ENCODE measurements at regions of chr18 and their contacts with region 1.

Region 1: DNA sequence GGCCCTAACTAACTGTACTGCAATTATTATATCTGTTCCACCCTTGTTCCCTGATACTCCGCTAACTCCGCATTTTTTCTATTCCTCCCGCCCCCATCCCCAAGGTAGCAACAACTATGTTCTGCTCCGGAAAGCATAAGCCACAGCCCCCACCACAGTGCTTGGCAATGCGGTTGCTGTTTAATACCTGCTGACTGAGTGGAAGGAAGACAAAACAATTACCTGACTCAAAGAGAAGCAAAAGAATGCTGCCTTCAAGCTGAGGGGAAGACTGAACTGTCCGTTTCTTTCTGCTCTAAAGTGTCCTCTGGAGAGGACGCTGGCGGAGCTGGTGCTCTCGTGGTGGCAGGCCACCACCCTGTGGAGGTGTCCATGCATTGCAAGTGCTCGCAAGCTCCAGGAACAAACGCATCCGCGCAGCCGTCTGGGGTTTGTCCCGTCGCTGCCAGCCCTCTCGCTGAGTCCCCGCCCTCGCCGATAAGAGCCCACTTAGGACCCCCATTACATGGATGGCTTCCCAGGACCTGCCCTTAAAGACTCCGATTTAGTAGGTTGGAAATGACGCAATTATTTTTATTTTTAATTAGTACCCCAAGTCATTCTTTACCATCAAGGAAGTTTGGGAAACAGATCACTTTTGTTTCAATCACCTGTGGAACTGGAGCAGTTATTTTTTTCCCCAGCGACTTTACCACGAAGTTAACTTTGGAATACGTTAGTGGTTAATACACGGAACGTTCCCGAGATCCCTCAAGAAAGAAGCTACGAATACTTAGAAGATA is 1.6 kb upstream of the MYL12A start:
- DNase-seq: peak; percentile 94
- H3K4me3 ChIP-seq: peak overlapping the region; percentile 81
- H3K27ac ChIP-seq: peak overlapping the region; percentile 84
- H3K4me1 ChIP-seq: peaks cover 43% of the 10 kb centered on the region
- CTCF ChIP-seq: peak; percentile 98

Region 2: DNA sequence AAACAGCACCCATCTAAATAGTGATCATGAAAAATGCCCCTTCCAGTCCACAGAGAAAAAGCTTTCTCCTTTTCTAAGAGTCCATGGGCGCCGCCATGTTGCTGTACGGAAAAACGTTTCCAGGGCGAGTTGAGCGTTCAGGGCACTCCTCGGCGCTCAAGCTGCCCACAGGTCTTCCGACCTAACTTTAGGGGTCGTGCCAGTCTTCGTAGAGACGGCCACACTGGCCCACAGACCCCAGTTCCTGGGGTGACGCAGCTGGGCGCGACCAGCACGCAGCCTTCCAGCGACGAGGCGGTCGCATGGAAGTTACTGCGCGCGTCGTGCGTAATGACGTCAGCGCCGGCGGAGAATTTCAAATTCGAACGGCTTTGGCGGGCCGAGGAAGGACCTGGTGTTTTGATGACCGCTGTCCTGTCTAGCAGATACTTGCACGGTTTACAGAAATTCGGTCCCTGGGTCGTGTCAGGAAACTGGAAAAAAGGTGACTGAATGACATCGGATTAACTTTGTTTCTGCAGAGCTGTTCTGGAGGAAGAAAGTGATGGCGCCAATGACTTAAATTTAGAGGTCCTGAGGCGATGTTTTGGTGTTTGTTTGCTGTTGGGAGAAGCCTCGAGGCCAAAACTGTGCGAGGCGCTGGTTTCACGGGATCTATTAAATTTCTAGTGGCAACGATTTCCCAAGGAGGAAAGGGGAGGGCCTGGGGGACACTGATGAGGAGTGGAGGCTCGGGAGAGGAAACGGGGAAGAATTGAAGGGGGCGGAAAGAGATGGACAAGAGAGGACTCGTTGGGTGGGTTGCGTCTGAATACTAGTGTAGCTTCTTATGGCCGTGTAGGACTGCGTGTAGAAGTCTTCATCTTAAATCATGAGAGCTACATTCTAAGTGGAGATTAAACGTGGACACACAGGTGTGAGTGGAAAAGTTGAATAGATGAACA is 674.6 kb before region 1 on chr18 and contains the starts of genes METTL4 and NDC80:
- CTCF ChIA-PET with region 1: no interaction called
- POLR2A ChIA-PET with region 1: interaction called, 3 read pairs
- intact Hi-C with region 1: loop called (anchors 5 kb)
- DNase-seq: peak; percentile 94
- H3K4me3 ChIP-seq: peak within 1 kb of the TSS; percentile 84
- H3K27ac ChIP-seq: peak within 1 kb of the TSS; percentile 78
- H3K4me1 ChIP-seq: peaks cover 19% of the 10 kb centered on the region
- CTCF ChIP-seq: no peak
- total RNA-seq, gene METTL4: 11.8 and 12.4 TPM in 2 replicates
- total RNA-seq, gene NDC80: 73.0 and 91.1 TPM in 2 replicates

Region 3: DNA sequence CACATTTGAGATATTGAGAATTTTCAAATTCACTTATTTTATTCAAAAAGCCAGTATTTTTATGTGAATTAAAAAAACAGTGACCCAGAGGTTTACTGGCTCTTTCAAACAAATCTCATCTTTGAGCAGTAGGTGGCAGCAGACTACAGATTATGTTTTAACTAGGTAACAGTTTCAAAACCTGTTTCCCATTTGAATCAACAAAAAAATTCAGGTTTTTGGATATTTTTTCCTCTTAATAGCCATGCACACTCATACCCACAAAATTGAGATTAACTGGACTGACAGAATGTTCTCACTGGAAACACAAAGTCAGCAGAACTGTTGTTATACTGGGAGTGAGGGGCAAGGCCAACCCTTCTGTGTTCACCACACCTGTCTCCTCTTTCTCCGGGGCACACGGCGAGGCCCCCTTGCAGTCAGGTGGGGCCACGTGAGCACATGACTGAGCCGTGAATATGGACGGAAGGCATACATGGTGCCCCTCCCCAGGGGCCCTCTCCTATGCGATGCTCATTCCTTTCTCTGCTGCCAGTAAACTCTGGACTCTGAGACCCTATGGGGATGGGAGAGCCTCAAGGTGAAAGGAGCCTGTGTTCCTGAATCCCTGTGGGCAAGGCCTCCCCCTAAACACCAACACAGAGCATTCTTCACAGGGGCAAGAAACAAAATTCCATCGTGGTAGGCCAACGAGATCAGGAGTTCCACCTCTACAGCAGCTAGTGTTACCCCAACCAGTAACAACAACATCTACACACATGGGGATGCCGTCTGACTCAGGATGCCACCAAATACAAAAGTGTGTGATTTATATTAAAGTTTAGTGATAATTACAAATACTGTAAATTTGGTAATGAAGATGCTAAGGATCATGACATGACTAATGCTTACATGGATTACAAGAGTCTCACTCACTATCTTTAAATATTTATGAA is 313.5 kb before region 1 on chr18:
- CTCF ChIA-PET with region 1: no interaction called
- POLR2A ChIA-PET with region 1: interaction called, 3 read pairs
- intact Hi-C with region 1: loop called (anchors 1 kb)
- DNase-seq: peak; percentile 81
- H3K4me3 ChIP-seq: no peak overlapping the region
- H3K27ac ChIP-seq: no peak overlapping the region
- H3K4me1 ChIP-seq: peaks cover 6% of the 10 kb centered on the region
- CTCF ChIP-seq: peak; percentile 99

Region 4: DNA sequence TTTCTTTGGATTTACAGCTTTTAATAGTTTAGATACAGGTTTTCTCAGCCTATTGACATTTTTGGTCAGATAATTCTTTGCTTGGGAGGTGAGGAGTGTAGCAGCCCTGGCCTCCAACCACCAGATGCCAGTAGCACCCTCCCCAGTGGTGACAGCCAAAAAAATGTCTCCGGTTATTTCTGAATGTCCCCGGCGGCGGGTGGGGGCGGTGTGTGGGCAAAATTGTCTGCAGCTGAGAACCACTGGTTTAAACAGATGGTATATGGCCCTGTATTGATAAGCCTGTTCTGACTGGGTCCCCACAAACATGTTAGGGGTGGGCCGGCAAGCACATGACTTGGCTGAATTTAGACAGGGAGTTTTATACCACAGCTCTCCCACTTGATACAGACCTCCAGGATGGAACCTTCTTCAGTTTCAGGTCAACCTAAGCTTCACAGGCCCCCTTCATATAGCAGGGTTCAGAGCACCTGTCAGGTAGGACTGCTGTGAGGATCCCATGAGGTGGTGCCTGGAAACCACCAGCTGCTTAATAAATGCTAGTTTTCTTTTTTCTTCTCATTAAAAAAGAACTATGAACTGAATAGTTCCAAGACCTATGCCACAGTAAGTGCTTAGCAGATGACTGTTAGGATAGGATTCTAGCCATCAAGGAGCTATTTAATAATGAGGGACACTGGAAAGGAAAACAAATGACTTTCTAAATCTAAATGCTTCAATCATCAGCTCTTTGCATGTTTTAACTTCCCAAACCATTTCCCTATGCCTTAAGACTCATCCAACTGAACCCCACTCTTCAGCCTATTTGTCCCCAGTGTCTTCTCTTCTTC is 251.2 kb before region 1 on chr18:
- CTCF ChIA-PET with region 1: no interaction called
- POLR2A ChIA-PET with region 1: no interaction called
- intact Hi-C with region 1: loop called (anchors 1 kb)
- DNase-seq: peak; percentile 69
- H3K4me3 ChIP-seq: no peak overlapping the region
- H3K27ac ChIP-seq: no peak overlapping the region
- H3K4me1 ChIP-seq: peaks cover 22% of the 10 kb centered on the region
- CTCF ChIP-seq: peak; percentile 86

Region 5: DNA sequence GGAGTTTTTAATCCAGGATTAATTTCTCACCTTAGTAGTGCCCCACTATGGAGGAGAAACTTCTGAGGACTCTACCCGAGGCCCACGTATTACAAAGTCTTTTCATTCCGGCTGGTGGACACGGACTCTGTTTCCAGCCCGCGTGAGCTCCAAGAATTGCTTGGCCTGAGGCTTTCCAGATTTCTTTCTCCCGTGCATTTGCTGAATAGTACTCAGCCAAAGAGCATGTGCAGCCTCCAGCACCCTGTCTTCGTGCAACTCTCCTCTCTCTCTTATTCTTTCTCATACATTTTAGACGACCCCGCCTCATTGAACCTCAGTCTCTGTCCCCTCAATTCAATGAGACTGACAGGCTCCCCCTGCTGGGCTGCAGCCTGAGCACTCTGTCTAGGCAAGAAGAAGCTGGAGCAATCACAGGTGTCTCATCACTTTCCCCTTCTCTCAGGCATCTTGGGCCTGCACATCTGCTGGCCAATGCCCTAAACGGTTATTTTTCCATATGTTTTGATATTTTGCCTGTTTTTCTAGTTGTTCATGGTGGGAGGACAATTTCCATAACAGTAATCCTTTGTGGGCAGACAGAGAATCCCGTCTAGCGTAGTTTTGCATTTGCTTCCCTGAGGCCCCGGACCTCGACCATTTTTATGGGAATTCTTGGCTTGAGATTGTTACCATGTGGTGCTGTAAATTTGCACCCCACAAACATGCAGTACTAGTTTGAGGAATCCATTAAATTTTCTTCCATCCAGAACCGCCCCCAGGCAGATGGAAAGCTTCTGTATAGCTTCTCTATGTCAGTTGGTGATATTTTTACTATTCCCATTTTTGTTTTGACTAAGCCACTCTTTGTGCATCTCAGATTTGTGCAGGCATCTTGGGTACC is 183.0 kb before region 1 on chr18:
- CTCF ChIA-PET with region 1: no interaction called
- POLR2A ChIA-PET with region 1: interaction called, 3 read pairs
- intact Hi-C with region 1: loop called (anchors 1 kb)
- DNase-seq: peak; percentile 72
- H3K4me3 ChIP-seq: no peak overlapping the region
- H3K27ac ChIP-seq: no peak overlapping the region
- H3K4me1 ChIP-seq: peaks cover 7% of the 10 kb centered on the region
- CTCF ChIP-seq: peak; percentile 93

Region 6: GRCh38 chr18:3151399-3152264 is 94.4 kb before region 1 on chr18:
- CTCF ChIA-PET with region 1: interaction called, 3 read pairs
- POLR2A ChIA-PET with region 1: interaction called, 3 read pairs
- intact Hi-C with region 1: loop called (anchors 1 kb)
- DNase-seq: peak; percentile 59
- H3K4me3 ChIP-seq: no peak overlapping the region
- H3K27ac ChIP-seq: no peak overlapping the region
- H3K4me1 ChIP-seq: no peaks in the 10 kb centered on the region
- CTCF ChIP-seq: peak; percentile 83

Region 7: DNA sequence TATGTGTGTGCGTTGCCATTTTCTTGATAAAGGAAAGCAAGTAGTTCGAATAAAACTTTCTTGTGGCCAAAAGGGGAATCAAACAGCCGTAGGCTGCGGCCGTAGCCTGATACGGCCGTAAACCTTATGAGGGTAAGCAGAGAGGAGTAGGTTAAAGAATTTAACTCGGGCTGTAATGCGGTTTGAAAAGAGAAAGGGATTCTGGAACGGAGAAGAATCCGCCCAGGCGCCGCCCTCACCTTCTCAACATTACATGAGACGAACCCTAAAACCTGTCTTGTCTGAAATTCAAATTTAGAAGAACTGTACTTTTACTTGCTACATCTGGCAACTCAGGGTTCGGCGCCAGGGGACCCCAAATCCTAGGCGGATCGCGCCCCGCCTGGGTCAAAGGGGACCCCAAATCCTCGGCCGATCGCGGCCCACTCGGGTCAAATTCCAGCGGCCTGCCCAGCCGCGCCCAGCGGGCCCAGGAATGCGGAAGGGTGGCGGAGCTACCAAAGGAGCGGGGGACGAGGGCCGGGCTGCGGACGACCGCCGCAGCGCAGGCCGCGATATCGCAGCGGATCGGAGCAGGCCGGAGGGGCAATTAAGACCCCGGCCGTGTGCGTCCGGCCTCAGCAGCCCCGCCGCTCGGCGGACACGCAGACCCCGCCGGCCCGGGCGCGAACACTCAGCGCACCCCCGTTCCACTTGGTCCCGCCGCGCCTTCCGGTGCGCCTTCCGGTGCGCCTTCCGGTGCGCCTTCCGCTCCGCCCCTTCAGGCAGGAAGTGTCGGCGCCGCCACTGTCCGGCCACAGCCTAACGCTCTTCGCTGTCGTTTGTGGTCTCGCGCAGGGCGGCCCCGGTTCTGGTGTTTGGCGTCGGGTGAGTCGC is 15.6 kb after region 1 on chr18 and contains the start of gene MYL12B:
- CTCF ChIA-PET with region 1: no interaction called
- POLR2A ChIA-PET with region 1: interaction called, 13 read pairs
- intact Hi-C with region 1: no loop called
- DNase-seq: peak; percentile 88
- H3K4me3 ChIP-seq: peak within 1 kb of the TSS; percentile 86
- H3K27ac ChIP-seq: peak within 1 kb of the TSS; percentile 81
- H3K4me1 ChIP-seq: peaks cover 62% of the 10 kb centered on the region
- CTCF ChIP-seq: no peak
- total RNA-seq, gene MYL12B: 240 and 260 TPM in 2 replicates

Measured in OCI-LY7 (cell line).